Adrenal gland (tissue), 19 donors: ENCODE measurements at regions of chr6 and their contacts with region 1.

Region 1: DNA sequence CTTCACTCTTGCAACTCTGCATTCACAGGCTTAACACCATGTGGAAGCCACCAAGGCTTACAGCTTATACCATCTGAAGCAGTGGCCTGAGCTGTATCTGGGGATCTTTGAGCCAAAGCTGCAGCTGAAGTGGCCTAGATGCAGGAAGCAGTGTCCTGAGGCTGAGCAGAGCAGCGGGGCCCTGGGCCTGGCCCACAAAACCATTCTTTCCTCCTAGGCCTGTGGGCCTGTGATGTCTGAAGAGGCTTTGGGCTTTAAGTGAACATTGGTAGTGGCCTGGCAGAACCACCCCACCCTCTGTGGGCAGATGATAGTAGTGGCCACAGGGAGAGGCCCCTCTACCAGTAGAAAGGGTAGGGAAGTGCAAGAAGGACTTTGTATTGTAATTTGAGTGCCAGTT is 6.9 kb upstream of the PREP start:
- DNase-seq: no peak
- H3K4me3 ChIP-seq: no peak overlapping the region
- H3K27ac ChIP-seq: no peak overlapping the region
- H3K4me1 ChIP-seq: no peaks in the 10 kb centered on the region
- H3K27me3 ChIP-seq: no peaks in the 10 kb centered on the region
- CTCF ChIP-seq: no peak
- POLR2A ChIP-seq: no peak

Region 2: DNA sequence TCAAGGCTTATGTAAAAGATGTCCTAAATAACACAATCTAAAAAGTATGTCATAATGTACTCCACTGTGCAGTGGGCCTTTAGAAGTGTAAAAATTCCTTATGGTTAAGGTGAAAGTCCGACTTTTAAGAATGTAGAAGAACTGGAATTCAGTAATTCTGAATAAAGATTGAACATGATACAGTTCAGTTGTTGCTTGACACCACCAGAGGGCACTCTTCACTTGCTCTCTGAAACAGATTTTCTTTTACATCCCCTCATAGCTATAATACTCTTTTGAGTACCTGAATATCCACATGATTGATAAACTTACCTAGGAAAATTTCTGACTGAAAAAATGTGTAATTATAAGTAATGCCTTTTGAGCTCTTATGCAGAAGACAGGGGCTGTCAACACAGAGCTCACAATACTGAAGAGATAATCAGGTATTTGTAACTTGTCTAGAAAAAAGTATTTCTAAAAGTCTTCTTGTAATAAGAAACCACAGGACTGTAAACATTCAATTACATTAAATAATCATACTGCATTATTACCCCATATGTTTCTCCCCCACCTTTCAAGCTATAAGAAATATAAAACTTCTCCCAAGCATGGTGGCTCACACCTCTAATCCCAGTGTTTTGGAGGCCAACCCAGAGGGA is 322.0 kb before region 1 on chr6:
- intact Hi-C with region 1: loop called in 1 of 2 experiments (anchors 5 kb)
- DNase-seq: peak in 6 of 7 donors; percentile 23 to 62 (median 36)
- H3K4me3 ChIP-seq: no peak overlapping the region
- H3K27ac ChIP-seq: no peak overlapping the region
- H3K4me1 ChIP-seq: no peaks in the 10 kb centered on the region
- H3K27me3 ChIP-seq: no peaks in the 10 kb centered on the region
- CTCF ChIP-seq: peak; percentile 55 to 93 (median 84)
- POLR2A ChIP-seq: no peak